ENCODE measurements at regions of chr10 and their contacts with region 1.

Region 1: GRCh38 chr10:132637477-132638129 is 100.0 kb downstream of the INPP5A start:
- DNase-seq: peak; percentile 29 to 39
- H3K4me3 ChIP-seq: no peak overlapping the region
- H3K27ac ChIP-seq: peak overlapping the region; percentile 4 to 51
- H3K4me1 ChIP-seq: peaks cover 3 to 15% of the 10 kb centered on the region in 2 donors
- H3K27me3 ChIP-seq: no peaks in the 10 kb centered on the region
- CTCF ChIP-seq: peak; percentile 73 to 90 (median 85)
- POLR2A ChIP-seq: no peak

Region 2: DNA sequence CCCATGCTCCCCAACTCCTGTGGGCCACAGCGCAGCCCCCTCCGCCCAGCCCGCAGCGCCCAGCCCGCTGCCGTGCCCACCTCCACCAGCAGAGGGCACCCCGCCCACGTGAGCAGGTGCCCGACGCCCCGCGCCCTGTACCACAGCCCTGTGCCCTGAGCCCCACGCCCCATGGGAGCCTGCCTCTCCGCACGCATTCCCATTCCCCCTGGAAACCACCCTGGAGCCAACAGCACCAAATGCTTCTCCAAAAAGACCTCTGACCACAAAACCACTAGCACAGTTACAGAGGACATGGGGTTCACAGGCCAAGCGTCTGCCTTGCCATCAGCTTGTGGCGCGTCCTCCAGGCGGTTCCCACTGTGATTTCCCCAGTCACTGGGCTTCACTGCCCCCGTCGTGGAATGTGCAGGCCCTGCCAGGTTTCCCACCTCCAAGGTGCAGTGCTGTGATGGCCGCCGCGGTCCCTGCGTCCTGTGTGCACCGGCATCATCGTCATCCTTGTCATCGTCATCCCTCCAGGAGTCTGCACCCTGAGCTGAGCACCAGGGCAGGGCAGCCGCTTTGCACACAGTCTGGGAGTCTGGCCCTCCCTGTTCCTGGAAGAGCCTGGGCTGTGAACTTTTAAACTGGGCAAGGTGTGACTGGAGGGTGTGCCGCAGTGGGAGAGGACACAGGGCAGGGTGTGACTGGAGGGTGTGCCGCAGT is 178.9 kb before region 1 on chr10:
- intact Hi-C with region 1: loop called (anchors 2 kb)
- DNase-seq: peak; percentile 62 to 69
- H3K4me3 ChIP-seq: no peak overlapping the region
- H3K27ac ChIP-seq: no peak overlapping the region
- H3K4me1 ChIP-seq: peaks cover 0 to 13% of the 10 kb centered on the region in 2 donors
- H3K27me3 ChIP-seq: no peaks in the 10 kb centered on the region
- CTCF ChIP-seq: peak; percentile 97 to 99 (median 98)
- POLR2A ChIP-seq: no peak

Region 3: GRCh38 chr10:132497023-132497680 is 140.5 kb before region 1 on chr10:
- intact Hi-C with region 1: no loop called
- DNase-seq: peak; percentile 13 to 17
- H3K4me3 ChIP-seq: no peak overlapping the region
- H3K27ac ChIP-seq: no peak overlapping the region
- H3K4me1 ChIP-seq: peaks cover 12 to 15% of the 10 kb centered on the region in 2 donors
- H3K27me3 ChIP-seq: no peaks in the 10 kb centered on the region
- CTCF ChIP-seq: no peak
- POLR2A ChIP-seq: no peak

Region 4: GRCh38 chr10:132536971-132537712 is 100.5 kb before region 1 on chr10:
- intact Hi-C with region 1: loop called (anchors 5 kb)
- DNase-seq: peak; percentile 100
- H3K4me3 ChIP-seq: peak overlapping the region; percentile 63 to 80
- H3K27ac ChIP-seq: peak overlapping the region; percentile 95 to 99
- H3K4me1 ChIP-seq: peaks cover 7 to 13% of the 10 kb centered on the region in 2 donors
- H3K27me3 ChIP-seq: no peaks in the 10 kb centered on the region
- CTCF ChIP-seq: peak; percentile 5 to 77 (median 59)
- POLR2A ChIP-seq: peak; percentile 89 to 92

Region 5: DNA sequence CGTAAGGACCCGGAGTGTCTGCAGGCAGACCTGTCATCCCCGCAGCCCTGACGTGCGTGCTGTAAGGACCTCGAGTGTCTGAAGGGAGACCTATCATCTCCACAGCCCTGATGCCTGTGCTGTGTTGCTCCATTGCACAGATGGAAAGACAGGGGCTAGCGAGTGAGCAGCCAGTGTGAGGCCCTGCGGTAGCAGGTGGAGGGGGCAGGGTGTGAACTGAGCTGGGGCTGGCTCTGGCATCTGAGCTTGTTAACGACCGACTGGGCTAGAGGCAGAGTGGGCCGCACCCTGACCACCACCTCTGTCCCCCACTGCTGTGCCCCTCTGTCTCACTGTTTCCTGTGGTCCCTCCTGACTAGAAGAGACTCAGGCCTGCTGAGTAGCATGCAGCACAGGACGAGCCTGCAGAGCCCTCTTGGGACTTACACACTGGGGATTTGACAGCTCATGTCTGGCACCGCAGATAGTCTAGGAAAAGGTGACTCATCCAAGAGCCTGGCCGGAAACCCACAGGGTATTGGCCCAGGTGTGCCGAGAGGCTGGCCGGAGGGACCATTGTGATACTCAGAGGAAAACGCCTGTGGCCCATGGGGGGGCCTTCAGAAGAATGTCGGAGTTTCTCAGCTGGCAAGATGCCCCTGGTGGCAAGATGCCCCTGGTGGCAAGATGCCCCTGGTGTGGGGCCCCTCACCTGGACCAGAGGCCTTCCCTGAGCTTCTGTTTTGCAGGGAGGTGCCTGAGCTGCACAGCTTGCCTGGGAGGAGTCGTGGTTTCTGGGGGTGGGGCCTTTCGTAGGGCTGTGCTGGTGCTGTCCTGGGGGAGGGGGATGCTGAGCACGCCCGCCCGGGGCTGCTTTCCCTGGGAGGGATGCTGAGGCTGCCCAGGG is 65.7 kb before region 1 on chr10:
- intact Hi-C with region 1: loop called (anchors 10 kb)
- DNase-seq: peak; percentile 60 to 78
- H3K4me3 ChIP-seq: no peak overlapping the region
- H3K27ac ChIP-seq: peak overlapping the region; percentile 49 to 59
- H3K4me1 ChIP-seq: peaks cover 0 to 23% of the 10 kb centered on the region in 2 donors
- H3K27me3 ChIP-seq: no peaks in the 10 kb centered on the region
- CTCF ChIP-seq: no peak
- POLR2A ChIP-seq: no peak

Region 6: GRCh38 chr10:132588301-132589013 is 49.1 kb before region 1 on chr10:
- intact Hi-C with region 1: no loop called
- DNase-seq: no peak
- H3K4me3 ChIP-seq: no peak overlapping the region
- H3K27ac ChIP-seq: peak overlapping the region in 1 of 2 donors; percentile 80
- H3K4me1 ChIP-seq: no peaks in the 10 kb centered on the region
- H3K27me3 ChIP-seq: no peaks in the 10 kb centered on the region
- CTCF ChIP-seq: no peak
- POLR2A ChIP-seq: no peak

Region 7: GRCh38 chr10:132774902-132775747 is 137.5 kb after region 1 on chr10:
- intact Hi-C with region 1: no loop called
- DNase-seq: no peak
- H3K4me3 ChIP-seq: no peak overlapping the region
- H3K27ac ChIP-seq: no peak overlapping the region
- H3K4me1 ChIP-seq: no peaks in the 10 kb centered on the region
- H3K27me3 ChIP-seq: no peaks in the 10 kb centered on the region
- CTCF ChIP-seq: no peak
- POLR2A ChIP-seq: no peak